Psoas muscle (tissue), 8 donors: ENCODE measurements at regions of chr17 and their contacts with region 1.

Region 1: DNA sequence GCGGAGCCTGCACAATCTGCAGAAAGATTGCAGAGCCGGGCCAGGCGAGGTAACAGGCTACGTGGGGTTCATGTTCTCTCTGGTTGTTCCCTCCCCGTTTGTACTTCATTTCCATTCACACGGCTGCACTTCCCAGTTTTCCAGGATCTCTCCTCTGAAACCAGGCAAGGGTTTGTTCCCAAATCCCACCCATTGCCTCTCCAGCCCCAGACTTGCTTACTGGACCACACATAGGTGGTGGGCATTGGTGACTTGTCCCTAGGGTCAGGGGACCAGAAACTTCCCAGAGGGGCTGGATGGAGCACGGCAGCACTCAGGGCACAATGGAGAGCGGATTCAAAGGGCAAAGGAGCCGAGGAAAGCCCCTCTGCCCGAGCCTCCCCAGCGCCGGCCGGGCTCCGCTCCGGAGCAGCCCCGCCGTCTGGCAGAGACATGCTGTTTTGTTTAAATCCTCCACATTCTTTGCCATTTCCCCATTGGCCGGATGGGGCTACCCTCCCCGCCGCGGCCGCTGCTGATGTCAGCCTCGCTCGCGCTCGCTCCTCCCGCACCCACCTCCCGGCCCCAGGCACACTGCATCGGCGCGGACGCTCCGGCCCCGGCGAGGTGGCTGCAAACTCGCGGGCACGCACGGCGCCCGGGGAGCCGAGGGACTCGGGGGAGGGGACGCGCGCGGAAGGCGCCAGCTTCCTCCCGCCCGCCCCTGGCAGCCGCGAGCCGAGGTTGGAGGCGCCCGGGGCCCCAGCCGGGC is at the start of gene PITPNC1:
- DNase-seq: peak; percentile 82 to 87
- ATAC-seq: peak; percentile 53 to 64 (median 56)
- H3K4me3 ChIP-seq: peak within 1 kb of the TSS; percentile 88
- H3K27ac ChIP-seq: peak within 1 kb of the TSS; percentile 63
- H3K4me1 ChIP-seq: peaks cover 10% of the 10 kb centered on the region
- H3K27me3 ChIP-seq: no peaks in the 10 kb centered on the region
- CTCF ChIP-seq: no peak
- total RNA-seq, gene PITPNC1: 6.5 to 12.3 (median 7.6) TPM

Region 2: DNA sequence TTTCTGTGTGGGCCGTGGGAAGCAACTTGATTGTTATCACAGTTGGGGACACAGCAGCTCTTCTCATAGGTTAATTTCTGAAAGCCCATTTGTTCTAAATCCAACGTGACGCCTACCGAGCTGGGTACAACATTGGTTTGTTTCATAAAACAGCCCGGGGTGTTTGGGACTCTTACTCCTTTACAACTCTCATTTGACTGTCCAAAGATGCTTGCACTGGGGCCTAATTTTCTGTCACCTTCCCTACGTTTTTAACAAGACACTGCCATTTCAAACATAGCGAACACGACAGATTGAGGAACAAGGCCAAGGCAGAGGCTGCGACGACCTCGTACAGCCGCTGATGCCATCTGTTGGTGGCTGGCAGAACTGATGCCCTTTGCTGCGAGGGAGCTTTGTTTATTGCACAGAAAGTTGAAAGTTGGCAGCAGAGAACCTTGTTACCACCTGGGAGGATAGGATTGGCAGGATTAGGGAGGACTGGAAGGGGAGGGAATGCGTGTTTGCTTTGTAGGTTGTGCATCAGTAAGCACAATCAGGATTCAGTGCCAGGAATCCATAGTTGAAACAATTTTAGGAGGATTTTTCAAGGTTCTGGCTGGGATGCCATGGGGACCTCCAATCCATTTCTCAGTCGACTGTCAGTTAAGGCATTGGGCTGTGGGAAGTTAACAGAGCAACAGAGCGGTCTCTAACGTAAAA is 98.5 kb after region 1 on chr17:
- intact Hi-C with region 1: loop called (anchors 1 to 2 kb)
- DNase-seq: peak; percentile 74 to 84
- ATAC-seq: peak; percentile 82 to 95 (median 87)
- H3K4me3 ChIP-seq: peak overlapping the region; percentile 35
- H3K27ac ChIP-seq: peak overlapping the region; percentile 51
- H3K4me1 ChIP-seq: peaks cover 12% of the 10 kb centered on the region
- H3K27me3 ChIP-seq: no peaks in the 10 kb centered on the region
- CTCF ChIP-seq: peak; percentile 87

Region 3: GRCh38 chr17:67602956-67603355 is 226.0 kb after region 1 on chr17:
- intact Hi-C with region 1: loop called in 1 of 2 experiments (anchors 5 kb)
- DNase-seq: no peak
- ATAC-seq: no peak
- H3K4me3 ChIP-seq: no peak overlapping the region
- H3K27ac ChIP-seq: no peak overlapping the region
- H3K4me1 ChIP-seq: peaks cover 9% of the 10 kb centered on the region
- H3K27me3 ChIP-seq: no peaks in the 10 kb centered on the region
- CTCF ChIP-seq: no peak

Region 4: GRCh38 chr17:67629971-67630320 is 253.0 kb after region 1 on chr17:
- intact Hi-C with region 1: loop called in 1 of 2 experiments (anchors 5 kb)
- DNase-seq: no peak
- ATAC-seq: peak in 1 of 4 donors; percentile 62
- H3K4me3 ChIP-seq: no peak overlapping the region
- H3K27ac ChIP-seq: no peak overlapping the region
- H3K4me1 ChIP-seq: no peaks in the 10 kb centered on the region
- H3K27me3 ChIP-seq: no peaks in the 10 kb centered on the region
- CTCF ChIP-seq: peak; percentile 40

Region 5: GRCh38 chr17:67689534-67690177 is 312.7 kb after region 1 on chr17:
- intact Hi-C with region 1: loop called (anchors 2 kb)
- DNase-seq: no peak
- ATAC-seq: peak in 2 of 4 donors; percentile 62 to 70
- H3K4me3 ChIP-seq: no peak overlapping the region
- H3K27ac ChIP-seq: no peak overlapping the region
- H3K4me1 ChIP-seq: no peaks in the 10 kb centered on the region
- H3K27me3 ChIP-seq: no peaks in the 10 kb centered on the region
- CTCF ChIP-seq: peak; percentile 82